HepG2 (cell line): ENCODE measurements at regions of chr11 and their contacts with region 1.

Region 1: DNA sequence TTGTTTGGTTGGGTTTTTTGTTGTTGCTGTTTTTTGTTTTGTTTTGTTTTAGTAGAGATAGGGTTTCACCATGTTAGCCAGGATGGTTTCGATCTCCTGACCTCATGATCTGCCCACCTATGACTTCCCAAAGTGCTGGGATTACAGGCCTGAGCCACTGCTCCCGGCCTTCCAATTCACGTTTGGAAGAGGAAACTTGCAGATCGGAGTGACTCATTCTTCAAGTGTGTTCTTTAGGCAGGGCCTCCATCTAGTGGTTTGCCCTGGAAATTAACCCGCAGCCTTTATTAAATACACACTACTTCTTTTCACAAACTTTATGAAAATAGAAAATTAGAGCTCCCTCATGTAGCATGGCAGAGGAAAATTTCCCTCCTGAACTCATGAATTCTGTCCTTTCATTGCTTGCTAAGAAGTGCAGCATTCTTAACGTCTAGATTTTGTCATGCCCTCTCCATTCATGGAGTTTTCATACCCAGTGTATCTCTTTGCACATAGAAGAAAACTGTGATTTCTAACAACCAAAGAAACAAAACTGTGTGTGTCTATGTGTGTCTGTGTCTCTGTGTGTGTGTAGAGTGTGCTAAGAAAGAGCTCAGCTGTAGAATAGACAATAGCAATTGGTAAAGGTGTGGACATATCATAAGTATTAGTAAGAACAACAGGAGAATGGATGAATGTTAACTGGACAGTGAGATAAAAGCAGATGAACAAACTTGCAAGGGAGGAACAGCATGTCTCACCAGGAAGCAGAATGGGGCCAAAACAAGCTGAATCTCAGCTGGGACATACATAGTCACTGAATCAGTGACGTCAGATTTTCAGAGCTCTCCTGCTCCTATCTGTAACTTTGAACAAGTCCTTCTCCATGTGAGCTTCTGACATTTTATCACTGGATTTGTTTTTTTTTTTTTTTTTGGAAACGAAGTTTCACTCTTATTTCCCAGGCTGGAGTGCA is 118.4 kb downstream of the BBOX1 start:
- DNase-seq: peak; percentile 69
- ATAC-seq: peak; percentile 92
- H3K4me3 ChIP-seq: no peak overlapping the region
- H3K27ac ChIP-seq: no peak overlapping the region
- H3K4me1 ChIP-seq: no peaks in the 10 kb centered on the region
- H3K27me3 ChIP-seq: no peaks in the 10 kb centered on the region
- CTCF ChIP-seq: peak; percentile 79
- EP300 ChIP-seq: no peak
- POLR2A ChIP-seq: no peak
- RAD21 ChIP-seq: peak; percentile 75

Region 2: DNA sequence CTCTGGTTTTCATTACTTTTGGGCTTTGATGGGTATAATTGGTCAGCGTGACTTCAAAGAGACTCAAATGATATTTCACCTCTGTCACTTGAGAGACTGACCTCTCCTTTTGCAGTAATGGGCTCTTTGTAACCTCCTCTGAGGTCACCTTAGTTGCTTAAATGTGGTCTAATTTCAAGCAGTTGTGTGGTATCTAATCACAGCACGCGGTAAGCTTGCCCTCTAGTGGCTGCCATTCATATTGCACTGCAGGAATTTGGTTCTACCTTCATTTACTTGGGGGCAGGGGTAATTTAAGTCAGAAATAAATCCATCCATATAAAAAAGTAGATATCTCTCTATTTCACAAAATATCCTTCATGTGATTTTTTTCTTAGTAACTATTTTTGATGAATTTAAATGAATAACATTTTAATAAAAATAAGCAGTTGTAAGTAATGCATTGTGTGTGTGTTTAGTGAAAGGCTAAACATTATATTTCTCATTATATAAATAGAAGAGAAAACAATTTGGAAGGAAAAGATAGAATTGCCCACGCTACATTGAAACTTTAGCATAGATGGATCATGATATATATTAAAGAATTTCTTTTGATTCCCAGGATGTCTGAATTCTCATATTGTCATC is 882.1 kb before region 1 on chr11:
- CTCF ChIA-PET with region 1: no interaction called
- POLR2A ChIA-PET with region 1: no interaction called
- in situ Hi-C with region 1: loop called (anchors 25 kb)
- intact Hi-C with region 1: no loop called
- DNase-seq: peak; percentile 38
- ATAC-seq: peak; percentile 76
- H3K4me3 ChIP-seq: no peak overlapping the region
- H3K27ac ChIP-seq: no peak overlapping the region
- H3K4me1 ChIP-seq: no peaks in the 10 kb centered on the region
- H3K27me3 ChIP-seq: no peaks in the 10 kb centered on the region
- CTCF ChIP-seq: peak; percentile 84
- EP300 ChIP-seq: no peak
- POLR2A ChIP-seq: no peak
- RAD21 ChIP-seq: peak; percentile 58

Region 3: GRCh38 chr11:26297189-26297975 is 861.6 kb before region 1 on chr11:
- CTCF ChIA-PET with region 1: interaction called, 10 read pairs
- POLR2A ChIA-PET with region 1: no interaction called
- in situ Hi-C with region 1: loop called (anchors 25 kb)
- intact Hi-C with region 1: loop called (anchors 10 kb)
- DNase-seq: peak; percentile 58
- ATAC-seq: peak; percentile 80
- H3K4me3 ChIP-seq: no peak overlapping the region
- H3K27ac ChIP-seq: no peak overlapping the region
- H3K4me1 ChIP-seq: no peaks in the 10 kb centered on the region
- H3K27me3 ChIP-seq: no peaks in the 10 kb centered on the region
- CTCF ChIP-seq: peak; percentile 72
- EP300 ChIP-seq: no peak
- POLR2A ChIP-seq: no peak
- RAD21 ChIP-seq: no peak

Region 4: DNA sequence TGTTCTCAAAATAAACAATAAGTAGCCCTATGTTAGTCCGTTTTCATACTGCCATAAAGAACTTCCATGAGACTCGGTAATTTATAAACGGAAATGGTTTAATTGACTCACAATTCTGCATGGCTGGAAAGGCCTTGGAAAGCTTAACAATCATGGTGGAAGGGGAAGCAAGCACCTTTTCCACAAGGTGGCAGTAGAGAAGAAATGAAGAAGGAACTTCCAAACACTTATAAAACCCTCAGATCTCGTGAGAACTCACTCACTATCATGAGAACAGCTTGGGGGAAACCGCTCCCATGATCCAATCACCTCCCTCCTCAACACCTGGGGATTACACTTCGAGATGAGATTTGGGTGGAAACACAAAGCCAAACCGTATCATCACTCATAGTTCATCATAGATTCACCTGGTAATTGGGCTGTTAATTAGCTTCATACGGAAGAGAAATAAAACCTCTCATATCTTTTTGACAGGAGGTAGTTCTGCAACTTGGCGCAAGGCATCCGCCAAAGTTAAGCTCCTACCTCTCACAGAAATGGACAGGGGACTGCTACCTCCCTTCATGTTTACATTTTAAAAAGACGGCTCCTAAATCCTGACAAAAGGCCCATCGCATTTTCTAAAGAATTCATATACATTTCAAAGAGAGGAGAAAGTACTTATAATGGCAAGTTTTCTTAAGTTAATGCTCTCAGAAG is 635.9 kb before region 1 on chr11:
- CTCF ChIA-PET with region 1: interaction called, 5 read pairs
- POLR2A ChIA-PET with region 1: no interaction called
- in situ Hi-C with region 1: no loop called
- intact Hi-C with region 1: loop called (anchors 10 kb)
- DNase-seq: peak; percentile 32
- ATAC-seq: peak; percentile 36; the same call in 1 of the 3 replicates
- H3K4me3 ChIP-seq: no peak overlapping the region
- H3K27ac ChIP-seq: no peak overlapping the region
- H3K4me1 ChIP-seq: no peaks in the 10 kb centered on the region
- H3K27me3 ChIP-seq: no peaks in the 10 kb centered on the region
- CTCF ChIP-seq: peak; percentile 43
- EP300 ChIP-seq: no peak
- POLR2A ChIP-seq: no peak
- RAD21 ChIP-seq: no peak

Region 5: DNA sequence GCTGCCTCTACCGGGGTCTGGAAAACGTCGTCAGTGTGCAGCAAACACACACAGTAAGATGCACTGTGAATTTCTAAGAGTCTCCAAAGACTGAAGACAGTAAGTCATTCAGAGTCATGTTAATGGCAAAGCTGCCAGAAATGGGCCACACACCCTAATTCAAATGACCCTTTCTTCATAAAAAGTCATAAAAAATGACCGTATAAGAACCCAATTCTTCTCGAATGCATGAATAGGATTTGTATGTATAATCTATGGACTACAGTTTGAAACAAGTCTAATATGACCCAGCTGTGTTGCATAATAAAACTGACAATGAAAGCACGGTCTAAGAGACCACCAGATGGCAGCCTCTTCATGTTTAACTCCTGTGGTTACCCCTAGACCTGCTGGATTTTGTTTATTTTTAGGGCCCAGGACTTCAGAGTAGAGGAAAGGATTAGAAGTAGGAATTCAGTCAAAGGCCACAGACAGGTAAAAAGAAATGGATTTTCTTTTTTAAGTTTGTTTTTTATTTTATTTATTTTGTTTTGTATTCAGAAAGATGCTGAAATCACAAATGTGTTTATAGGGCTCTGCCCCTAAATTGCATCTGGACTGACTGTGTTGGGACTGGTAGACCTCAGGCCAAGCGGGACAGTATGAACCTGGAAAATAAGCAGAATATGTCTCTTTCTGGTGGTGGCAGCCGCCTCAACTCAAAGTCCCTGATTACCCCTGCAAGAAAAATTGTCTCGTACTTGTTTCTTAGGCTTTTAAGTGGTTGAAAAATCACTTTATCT is 405.1 kb before region 1 on chr11:
- CTCF ChIA-PET with region 1: interaction called, 53 read pairs
- POLR2A ChIA-PET with region 1: no interaction called
- in situ Hi-C with region 1: loop called (anchors 5 kb)
- intact Hi-C with region 1: loop called (anchors 1 kb)
- DNase-seq: peak; percentile 56
- ATAC-seq: peak; percentile 91
- H3K4me3 ChIP-seq: no peak overlapping the region
- H3K27ac ChIP-seq: no peak overlapping the region
- H3K4me1 ChIP-seq: no peaks in the 10 kb centered on the region
- H3K27me3 ChIP-seq: no peaks in the 10 kb centered on the region
- CTCF ChIP-seq: peak; percentile 69
- EP300 ChIP-seq: no peak
- POLR2A ChIP-seq: no peak
- RAD21 ChIP-seq: peak; percentile 48; the same call in 1 of the 2 replicates

Region 6: GRCh38 chr11:26974069-26974783 is 184.8 kb before region 1 on chr11:
- CTCF ChIA-PET with region 1: no interaction called
- POLR2A ChIA-PET with region 1: no interaction called
- in situ Hi-C with region 1: no loop called
- intact Hi-C with region 1: loop called (anchors 1 kb)
- DNase-seq: no peak
- ATAC-seq: no peak
- H3K4me3 ChIP-seq: no peak overlapping the region
- H3K27ac ChIP-seq: no peak overlapping the region
- H3K4me1 ChIP-seq: no peaks in the 10 kb centered on the region
- H3K27me3 ChIP-seq: no peaks in the 10 kb centered on the region
- CTCF ChIP-seq: no peak
- EP300 ChIP-seq: no peak
- POLR2A ChIP-seq: no peak
- RAD21 ChIP-seq: no peak

Region 7: GRCh38 chr11:27040302-27041115 is 118.5 kb before region 1 on chr11 and contains the start of gene BBOX1:
- CTCF ChIA-PET with region 1: interaction called, 3 read pairs
- POLR2A ChIA-PET with region 1: no interaction called
- in situ Hi-C with region 1: no loop called
- intact Hi-C with region 1: loop called (anchors 10 kb)
- DNase-seq: no peak
- ATAC-seq: peak; percentile 36; the same call in 2 of the 3 replicates
- H3K4me3 ChIP-seq: no peak within 1 kb of the TSS
- H3K27ac ChIP-seq: no peak within 1 kb of the TSS
- H3K4me1 ChIP-seq: no peaks in the 10 kb centered on the region
- H3K27me3 ChIP-seq: no peaks in the 10 kb centered on the region
- CTCF ChIP-seq: no peak
- EP300 ChIP-seq: no peak
- POLR2A ChIP-seq: no peak
- RAD21 ChIP-seq: no peak
- total RNA-seq, gene BBOX1: not detected in 2 replicates